ENCODE measurements at regions of chrX and their contacts with region 1.

Region 1: GRCh38 chrX:108070891-108071290 is 20.5 kb downstream of the PSMD10 start:
- DNase-seq: peak; percentile 47
- H3K4me3 ChIP-seq: no peak overlapping the region
- H3K27ac ChIP-seq: no peak overlapping the region
- H3K27me3 ChIP-seq: peaks cover 9% of the 10 kb centered on the region
- CTCF ChIP-seq: no peak

Region 2: GRCh38 chrX:107834275-107835201 is 236.4 kb before region 1 on chrX:
- CTCF ChIA-PET with region 1: no interaction called
- POLR2A ChIA-PET with region 1: no interaction called
- DNase-seq: no peak
- H3K4me3 ChIP-seq: no peak overlapping the region
- H3K27ac ChIP-seq: no peak overlapping the region
- H3K27me3 ChIP-seq: no peaks in the 10 kb centered on the region
- CTCF ChIP-seq: no peak

Region 3: DNA sequence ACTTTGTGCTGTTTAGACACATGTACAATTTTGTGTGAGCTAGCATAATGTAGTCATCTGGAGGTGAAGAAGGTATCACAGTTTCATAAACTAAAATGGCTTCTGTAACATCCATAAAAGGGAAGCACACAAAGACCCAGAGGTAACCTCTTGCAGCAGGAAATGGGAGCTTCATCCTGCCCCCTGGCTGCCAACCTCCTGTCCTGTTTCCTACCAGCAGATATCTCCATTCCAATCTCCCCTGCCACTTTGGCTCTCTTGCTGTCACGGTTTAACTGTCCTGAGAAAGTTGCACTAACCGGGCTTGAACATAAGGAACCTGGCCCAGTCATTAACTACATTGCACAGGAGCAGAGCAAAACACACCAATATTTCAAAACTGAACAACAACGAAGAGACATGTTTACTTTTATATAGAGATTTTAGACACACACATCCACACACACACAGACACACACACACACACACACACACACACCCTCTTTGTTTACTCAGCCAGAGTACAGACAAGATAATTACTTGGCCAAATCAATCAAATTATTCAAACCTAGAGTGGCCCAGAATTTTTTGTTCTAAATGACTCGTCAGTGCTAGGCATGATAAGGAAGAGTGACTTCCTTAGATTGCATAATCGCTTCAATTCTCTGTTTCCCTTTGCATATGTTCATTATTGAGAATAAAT is 221.0 kb before region 1 on chrX:
- CTCF ChIA-PET with region 1: no interaction called
- POLR2A ChIA-PET with region 1: no interaction called
- DNase-seq: no peak
- H3K4me3 ChIP-seq: no peak overlapping the region
- H3K27ac ChIP-seq: no peak overlapping the region
- H3K27me3 ChIP-seq: no peaks in the 10 kb centered on the region
- CTCF ChIP-seq: no peak

Region 4: GRCh38 chrX:108020631-108021030 is 50.3 kb before region 1 on chrX:
- CTCF ChIA-PET with region 1: interaction called, 25 read pairs
- POLR2A ChIA-PET with region 1: no interaction called
- DNase-seq: no peak
- H3K4me3 ChIP-seq: no peak overlapping the region
- H3K27ac ChIP-seq: no peak overlapping the region
- H3K27me3 ChIP-seq: no peaks in the 10 kb centered on the region
- CTCF ChIP-seq: peak; percentile 49

Region 5: GRCh38 chrX:108055546-108055945 is 15.3 kb before region 1 on chrX:
- CTCF ChIA-PET with region 1: no interaction called
- POLR2A ChIA-PET with region 1: no interaction called
- DNase-seq: no peak
- H3K4me3 ChIP-seq: no peak overlapping the region
- H3K27ac ChIP-seq: no peak overlapping the region
- H3K27me3 ChIP-seq: peaks cover 2% of the 10 kb centered on the region
- CTCF ChIP-seq: no peak

Region 6: GRCh38 chrX:108105473-108105872 is 34.6 kb after region 1 on chrX:
- CTCF ChIA-PET with region 1: no interaction called
- POLR2A ChIA-PET with region 1: no interaction called
- DNase-seq: no peak
- H3K4me3 ChIP-seq: no peak overlapping the region
- H3K27ac ChIP-seq: no peak overlapping the region
- H3K27me3 ChIP-seq: no peaks in the 10 kb centered on the region
- CTCF ChIP-seq: no peak

Measured in AG04450 (cell line).